AG04450 (cell line): ENCODE measurements at regions of chr16 and their contacts with region 1.

Region 1: GRCh38 chr16:89565506-89566372 is 5.3 kb downstream of the RPL13 start:
- DNase-seq: no peak
- H3K4me3 ChIP-seq: peak overlapping the region; percentile 37
- H3K27ac ChIP-seq: no peak overlapping the region
- H3K27me3 ChIP-seq: no peaks in the 10 kb centered on the region
- CTCF ChIP-seq: peak; percentile 52

Region 2: DNA sequence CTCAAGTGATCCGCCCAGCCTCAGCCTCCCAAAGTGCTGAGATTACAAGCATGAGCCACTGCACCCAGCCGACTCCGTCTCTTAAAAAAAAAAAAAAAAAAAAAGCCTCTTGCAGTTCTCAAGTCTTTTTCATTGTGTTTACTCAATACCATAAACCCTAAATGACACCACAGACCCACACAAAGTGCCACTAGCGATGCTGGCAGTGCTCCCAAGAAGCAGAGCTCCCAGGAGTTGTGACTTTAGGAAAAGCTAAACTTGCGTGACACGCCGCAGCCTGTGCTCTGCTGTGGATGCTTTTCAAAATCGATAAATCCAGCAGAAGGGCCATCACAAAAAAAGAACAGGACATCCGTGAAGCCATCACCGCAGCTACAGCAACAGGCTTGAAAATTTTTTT is 190.1 kb before region 1 on chr16:
- CTCF ChIA-PET with region 1: no interaction called
- POLR2A ChIA-PET with region 1: interaction called, 10 read pairs
- DNase-seq: no peak
- H3K4me3 ChIP-seq: no peak overlapping the region
- H3K27ac ChIP-seq: no peak overlapping the region
- H3K27me3 ChIP-seq: no peaks in the 10 kb centered on the region
- CTCF ChIP-seq: no peak

Region 3: DNA sequence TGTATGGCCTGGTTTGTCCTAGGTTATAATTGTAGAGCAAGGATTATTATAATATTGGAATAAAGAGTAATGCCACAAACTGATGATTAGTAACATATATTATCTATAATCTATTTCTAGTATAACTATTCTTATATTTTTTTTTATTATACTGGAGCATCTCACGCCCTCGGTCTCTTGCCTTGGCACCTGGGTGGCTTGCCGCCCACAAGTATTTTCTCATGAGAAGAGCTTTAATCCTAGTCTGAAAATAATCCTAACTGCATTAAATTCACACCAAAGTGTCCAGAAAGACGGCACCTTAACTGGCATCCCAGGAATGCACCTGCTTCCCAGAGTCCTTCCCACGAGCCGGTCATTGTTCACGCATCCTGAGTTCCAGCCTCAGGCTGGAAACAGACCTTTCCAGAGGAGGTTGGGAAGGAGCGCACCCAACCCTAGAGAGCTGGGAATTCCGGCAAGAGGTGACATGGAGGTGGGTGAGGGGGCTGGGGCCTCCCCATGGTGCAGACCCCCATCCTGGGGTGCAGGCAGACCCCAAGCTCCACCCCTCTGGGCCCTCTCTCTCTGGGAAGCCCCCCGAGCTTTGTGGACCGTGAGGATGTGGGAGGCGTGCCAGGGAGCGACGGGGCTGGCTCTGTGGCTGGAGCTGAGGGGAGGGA is 75.8 kb after region 1 on chr16:
- CTCF ChIA-PET with region 1: interaction called, 13 read pairs
- POLR2A ChIA-PET with region 1: interaction called, 6 read pairs
- DNase-seq: no peak
- H3K4me3 ChIP-seq: no peak overlapping the region
- H3K27ac ChIP-seq: no peak overlapping the region
- H3K27me3 ChIP-seq: no peaks in the 10 kb centered on the region
- CTCF ChIP-seq: no peak